ENCODE measurements at regions of chr7 and their contacts with region 1.

Region 1: DNA sequence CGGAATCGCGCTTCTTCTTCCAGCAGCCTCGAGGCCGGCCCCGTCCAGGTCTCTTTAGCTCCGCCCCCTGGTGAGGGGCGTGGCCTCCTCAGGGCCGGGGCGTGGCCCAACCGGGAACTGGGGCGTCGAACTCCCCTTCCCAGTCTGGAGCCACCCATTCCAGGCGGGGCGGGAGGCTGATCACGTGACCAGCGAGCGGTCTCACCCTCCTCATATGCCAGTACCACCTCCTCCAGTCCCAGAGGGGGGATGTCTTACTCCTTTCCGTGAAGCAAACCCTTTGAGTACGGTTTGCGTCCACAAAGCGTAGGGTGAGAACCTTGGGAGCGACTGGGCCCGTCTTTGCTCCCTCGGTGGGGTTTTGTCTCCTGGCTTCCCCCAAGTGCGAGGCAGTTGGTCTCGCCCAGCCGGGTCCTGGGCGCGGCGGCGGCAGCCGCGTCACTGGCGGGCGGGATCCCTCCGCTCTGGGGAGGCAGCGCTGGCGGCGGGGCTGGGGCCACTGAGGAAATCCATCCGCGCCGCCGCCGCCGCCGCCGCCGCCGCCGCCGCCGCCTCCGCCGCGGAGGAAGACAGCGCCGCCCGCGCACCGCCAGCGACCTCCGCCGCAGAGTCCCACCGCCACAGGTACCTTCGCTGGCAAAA is at the start of gene GNB2:
- DNase-seq: peak; percentile 100
- ATAC-seq: peak; percentile 95
- H3K4me3 ChIP-seq: peak within 1 kb of the TSS; percentile 54 to 75
- H3K27ac ChIP-seq: peak within 1 kb of the TSS; percentile 6 to 90
- H3K4me1 ChIP-seq: no peaks in the 10 kb centered on the region
- H3K27me3 ChIP-seq: no peaks in the 10 kb centered on the region
- total RNA-seq, gene GNB2: 185 to 204 TPM

Region 2: DNA sequence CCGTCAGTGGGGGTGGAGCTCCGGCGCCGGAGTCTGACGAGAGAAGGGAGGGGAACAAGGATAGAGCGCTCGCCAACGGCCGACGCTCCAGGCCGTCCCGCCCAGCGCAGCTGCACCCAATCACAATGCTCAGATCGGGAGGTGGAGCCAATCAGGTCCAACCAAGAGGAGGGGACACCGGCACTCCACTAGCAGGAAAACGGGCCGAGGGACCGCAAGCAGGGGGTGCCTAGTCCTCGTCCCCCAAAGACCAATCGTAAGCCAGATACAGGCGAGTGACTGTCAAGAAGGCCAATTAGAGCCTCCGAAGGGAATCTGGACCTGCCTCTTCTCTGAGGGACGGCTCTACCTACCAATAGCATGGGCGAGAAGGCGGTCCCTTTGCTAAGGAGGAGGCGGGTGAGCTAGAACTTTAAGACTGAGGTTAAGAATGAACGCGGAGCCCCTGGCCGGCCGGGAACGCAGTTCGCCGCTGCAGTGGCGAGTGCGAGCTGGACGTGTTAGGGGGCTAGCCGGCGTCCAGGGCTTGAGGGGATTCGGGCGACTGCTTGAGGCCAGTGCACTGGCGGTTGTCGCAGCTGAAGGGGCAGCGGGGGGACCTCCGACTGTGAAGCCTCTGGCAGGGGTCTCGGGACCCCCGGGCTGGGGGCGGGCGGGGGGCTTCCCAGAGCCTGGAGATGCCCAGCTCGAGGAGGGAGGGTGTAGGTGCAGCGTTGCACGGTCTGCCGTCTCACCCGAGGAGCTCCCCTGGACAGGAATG is 87.0 kb before region 1 on chr7 and contains the start of gene FBXO24:
- intact Hi-C with region 1: loop called in 1 of 2 experiments (anchors 5 kb)
- DNase-seq: peak; percentile 100
- ATAC-seq: peak; percentile 98
- H3K4me3 ChIP-seq: peak within 1 kb of the TSS; percentile 57 to 85
- H3K27ac ChIP-seq: peak within 1 kb of the TSS in 1 of 2 donors; percentile 72
- H3K4me1 ChIP-seq: no peaks in the 10 kb centered on the region
- H3K27me3 ChIP-seq: no peaks in the 10 kb centered on the region
- total RNA-seq, gene FBXO24: 0.81 TPM in 1 of 2 donors, not detected in the other

Region 3: DNA sequence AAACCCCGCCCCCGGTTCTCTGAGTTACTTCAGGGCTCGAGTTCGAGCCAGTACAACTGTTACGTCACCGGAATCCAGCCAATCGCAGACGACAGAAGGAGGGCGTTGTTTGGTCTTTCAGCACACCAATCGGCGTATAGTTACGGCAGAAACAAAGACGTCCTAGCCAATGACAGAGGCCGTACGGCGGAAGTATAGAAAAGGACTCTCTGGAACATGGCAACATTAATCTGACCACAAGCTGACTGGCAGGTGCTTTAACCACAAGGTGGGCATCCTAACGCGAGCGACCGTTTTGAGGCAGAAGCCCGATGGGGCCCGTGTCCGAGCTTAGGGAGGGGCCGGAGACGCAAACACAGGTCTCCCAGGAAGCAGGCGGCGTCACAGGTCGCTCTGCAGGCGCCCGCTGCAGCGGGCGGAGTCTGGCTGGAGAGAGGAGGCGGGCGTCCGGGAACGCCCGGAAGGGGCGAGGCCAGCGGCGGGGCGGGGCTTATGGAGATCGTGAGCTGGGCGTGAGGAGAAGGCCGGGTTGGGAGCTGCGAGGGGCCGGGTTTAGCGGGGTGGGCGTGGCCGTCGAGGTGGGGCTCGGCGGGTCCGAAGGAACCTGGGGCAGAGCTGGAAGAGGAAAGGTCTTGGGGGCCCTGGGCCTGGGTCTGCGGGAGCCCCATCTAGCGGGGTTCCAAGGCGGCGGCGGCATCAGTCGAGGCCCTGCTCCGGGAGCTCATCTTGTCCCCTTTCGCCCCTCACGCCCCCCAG is 61.3 kb before region 1 on chr7 and contains the start of gene MOSPD3:
- intact Hi-C with region 1: loop called (anchors 1 to 5 kb)
- DNase-seq: peak; percentile 99 to 100
- ATAC-seq: peak; percentile 98
- H3K4me3 ChIP-seq: peak within 1 kb of the TSS; percentile 58 to 62
- H3K27ac ChIP-seq: peak within 1 kb of the TSS in 1 of 2 donors; percentile 87
- H3K4me1 ChIP-seq: no peaks in the 10 kb centered on the region
- H3K27me3 ChIP-seq: no peaks in the 10 kb centered on the region
- total RNA-seq, gene MOSPD3: 15.1 to 19.1 TPM

Region 4: DNA sequence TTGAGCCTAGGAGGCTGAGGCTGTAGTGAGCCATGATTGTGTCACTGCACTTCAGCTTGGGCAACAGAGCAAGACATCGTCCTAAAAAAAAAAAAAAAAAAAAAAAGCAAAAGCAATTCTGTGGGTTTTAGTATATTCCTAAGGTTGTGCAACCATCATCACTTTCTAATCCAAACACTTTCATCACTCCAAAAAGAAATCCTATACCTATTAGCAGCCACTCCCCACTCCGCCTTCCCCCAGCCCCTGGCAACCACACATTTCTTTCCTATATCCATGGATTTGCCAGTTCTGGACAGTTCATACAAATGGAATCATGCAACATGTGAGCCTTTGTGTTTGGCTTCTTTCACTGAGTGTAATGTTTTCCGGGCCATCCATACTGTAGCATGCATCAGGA is 80.3 kb after region 1 on chr7:
- intact Hi-C with region 1: no loop called
- DNase-seq: no peak
- ATAC-seq: no peak
- H3K4me3 ChIP-seq: no peak overlapping the region
- H3K27ac ChIP-seq: no peak overlapping the region
- H3K4me1 ChIP-seq: no peaks in the 10 kb centered on the region
- H3K27me3 ChIP-seq: no peaks in the 10 kb centered on the region

Region 5: DNA sequence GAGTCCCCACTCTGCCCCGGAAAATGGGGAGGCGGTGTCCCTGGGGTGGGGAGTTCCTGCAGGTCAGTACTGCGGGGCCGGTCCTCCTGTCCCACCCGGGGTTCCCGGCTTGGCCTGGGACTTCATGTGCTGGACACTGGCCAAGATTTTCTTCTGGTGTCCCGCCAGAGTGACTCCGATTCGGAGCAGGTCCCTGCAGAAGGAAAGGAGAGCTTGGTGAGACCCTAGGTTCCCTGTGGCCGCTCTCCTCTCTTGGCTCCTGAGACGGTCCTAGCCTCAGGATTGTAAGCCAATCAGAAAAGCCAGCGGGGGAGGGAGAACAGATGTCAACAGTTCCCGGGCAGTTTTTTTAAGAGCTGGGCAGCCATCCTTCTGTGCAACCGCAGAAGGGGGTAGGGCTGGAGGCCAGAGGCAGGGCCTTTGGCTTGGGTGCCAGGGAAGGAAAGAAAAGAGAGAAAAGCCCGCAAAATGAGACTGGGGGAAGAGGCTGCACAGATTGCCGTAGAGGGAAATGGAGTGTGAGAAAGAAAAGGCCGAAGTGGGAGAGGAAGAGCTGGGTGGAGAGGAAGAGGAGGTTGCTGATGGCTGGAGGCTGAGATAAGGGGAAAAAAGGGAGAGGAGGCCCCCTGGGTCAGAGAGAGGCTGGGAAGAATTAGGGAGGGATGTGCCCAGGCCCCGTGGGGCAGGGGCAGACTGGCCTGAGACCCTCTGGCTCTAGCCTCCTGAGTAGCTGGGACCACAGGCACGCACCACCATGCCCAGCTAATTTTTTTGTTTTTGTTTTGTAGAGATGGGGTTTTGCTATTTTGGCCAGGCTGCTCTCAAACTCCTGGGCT is 130.2 kb after region 1 on chr7:
- intact Hi-C with region 1: no loop called
- DNase-seq: peak; percentile 87 to 92
- ATAC-seq: peak; percentile 90
- H3K4me3 ChIP-seq: no peak overlapping the region
- H3K27ac ChIP-seq: no peak overlapping the region
- H3K4me1 ChIP-seq: no peaks in the 10 kb centered on the region
- H3K27me3 ChIP-seq: no peaks in the 10 kb centered on the region

Region 6: GRCh38 chr7:100965723-100966541 is 292.5 kb after region 1 on chr7:
- intact Hi-C with region 1: no loop called
- DNase-seq: peak; percentile 85 to 92
- ATAC-seq: peak; percentile 28
- H3K4me3 ChIP-seq: no peak overlapping the region
- H3K27ac ChIP-seq: no peak overlapping the region
- H3K4me1 ChIP-seq: no peaks in the 10 kb centered on the region
- H3K27me3 ChIP-seq: peaks cover 0 to 2% of the 10 kb centered on the region in 2 donors